Activated CD4-positive, alpha-beta memory T cell treated with anti-CD3 and anti-CD28 coated beads for 36 hours (primary cell): ENCODE measurements at regions of chr9 and their contacts with region 1.

Region 1: GRCh38 chr9:19161257-19162025 is 34.1 kb upstream of the PLIN2 start:
- DNase-seq: peak; percentile 73
- H3K4me3 Mint-ChIP-seq: peak overlapping the region; percentile 14
- H3K27ac Mint-ChIP-seq: peak overlapping the region; percentile 76
- H3K4me1 Mint-ChIP-seq: peaks cover 19% of the 10 kb centered on the region
- H3K27me3 Mint-ChIP-seq: no peaks in the 10 kb centered on the region

Region 2: DNA sequence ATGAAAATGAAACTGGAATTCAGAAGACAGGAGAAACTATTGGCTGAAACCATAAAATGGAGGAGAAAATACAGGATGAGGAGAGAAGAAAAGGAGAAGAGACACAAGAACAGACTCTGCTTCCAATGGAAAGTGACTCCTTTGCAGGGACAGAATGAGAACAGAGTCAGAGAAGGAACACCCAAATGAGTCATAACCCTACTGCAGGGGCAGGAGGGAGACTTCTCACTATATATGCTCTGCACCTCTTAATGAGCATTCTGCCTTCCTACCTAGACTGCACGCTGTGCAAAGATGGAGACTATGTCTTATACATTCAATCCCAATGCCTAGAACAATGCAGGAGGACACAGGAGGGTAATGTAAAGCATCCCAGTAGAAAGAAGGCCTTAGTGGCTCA is 130.5 kb before region 1 on chr9:
- CTCF ChIA-PET with region 1: no interaction called
- POLR2A ChIA-PET with region 1: no interaction called
- intact Hi-C with region 1: no loop called
- DNase-seq: no peak
- H3K4me3 Mint-ChIP-seq: no peak overlapping the region
- H3K27ac Mint-ChIP-seq: no peak overlapping the region
- H3K4me1 Mint-ChIP-seq: peaks cover 8% of the 10 kb centered on the region
- H3K27me3 Mint-ChIP-seq: peaks cover 8% of the 10 kb centered on the region

Region 3: DNA sequence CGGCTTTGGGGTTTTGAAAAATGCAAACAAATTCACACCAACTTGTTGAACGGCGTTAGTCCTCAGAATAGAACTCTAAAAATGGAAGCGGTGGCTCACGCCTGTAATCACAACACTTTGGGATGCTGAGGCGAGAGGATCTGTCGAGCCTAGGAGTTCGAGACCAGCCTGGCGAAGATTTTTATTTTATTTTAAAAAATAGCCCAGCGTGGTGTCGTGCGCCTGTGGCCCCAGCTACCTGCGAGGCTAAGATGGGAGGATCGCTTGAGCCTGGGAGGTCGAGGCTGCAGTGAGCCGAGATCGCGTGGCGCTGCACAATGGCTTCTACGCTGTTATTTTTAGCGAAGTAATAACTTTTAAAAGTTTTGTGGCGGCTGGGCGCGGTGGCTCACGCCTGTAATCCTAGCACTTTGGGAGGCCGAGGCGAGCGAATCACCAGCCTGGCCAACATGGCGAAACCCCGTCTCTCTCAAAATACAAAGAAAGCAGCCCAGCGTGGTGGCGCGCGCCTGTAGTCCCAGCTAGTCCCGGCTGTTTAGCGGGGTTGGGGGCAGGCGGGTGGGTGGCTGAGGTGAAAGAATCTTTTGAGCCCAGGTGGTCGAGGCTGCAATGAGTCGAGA is 33.5 kb before region 1 on chr9:
- CTCF ChIA-PET with region 1: interaction called, 12 read pairs
- POLR2A ChIA-PET with region 1: interaction called, 5 read pairs
- intact Hi-C with region 1: loop called (anchors 1 kb)
- DNase-seq: peak; percentile 48
- H3K4me3 Mint-ChIP-seq: peak overlapping the region; percentile 93
- H3K27ac Mint-ChIP-seq: peak overlapping the region; percentile 97
- H3K4me1 Mint-ChIP-seq: peaks cover 56% of the 10 kb centered on the region
- H3K27me3 Mint-ChIP-seq: no peaks in the 10 kb centered on the region

Region 4: GRCh38 chr9:19239955-19240354 is 78.5 kb after region 1 on chr9:
- CTCF ChIA-PET with region 1: no interaction called
- POLR2A ChIA-PET with region 1: no interaction called
- intact Hi-C with region 1: no loop called
- DNase-seq: no peak
- H3K4me3 Mint-ChIP-seq: no peak overlapping the region
- H3K27ac Mint-ChIP-seq: no peak overlapping the region
- H3K4me1 Mint-ChIP-seq: peaks cover 27% of the 10 kb centered on the region
- H3K27me3 Mint-ChIP-seq: no peaks in the 10 kb centered on the region